Thyroid gland (tissue), 4 donors: ENCODE measurements at regions of chr13 and their contacts with region 1.

Region 1: GRCh38 chr13:108895220-108895704 is 265.9 kb downstream of the MYO16 start:
- DNase-seq: no peak
- H3K4me3 ChIP-seq: no peak overlapping the region
- H3K27ac ChIP-seq: no peak overlapping the region
- H3K4me1 ChIP-seq: no peaks in the 10 kb centered on the region
- H3K27me3 ChIP-seq: no peaks in the 10 kb centered on the region
- CTCF ChIP-seq: peak in 5 of 6 experiments; percentile 22 to 68 (median 54)
- POLR2A ChIP-seq: no peak

Region 2: GRCh38 chr13:107475753-107476453 is 1419.4 kb before region 1 on chr13:
- intact Hi-C with region 1: no loop called
- DNase-seq: no peak
- H3K4me3 ChIP-seq: no peak overlapping the region
- H3K27ac ChIP-seq: no peak overlapping the region
- H3K4me1 ChIP-seq: no peaks in the 10 kb centered on the region
- H3K27me3 ChIP-seq: no peaks in the 10 kb centered on the region
- CTCF ChIP-seq: no peak
- POLR2A ChIP-seq: no peak

Region 3: GRCh38 chr13:108230377-108230776 is 664.9 kb before region 1 on chr13:
- intact Hi-C with region 1: loop called (anchors 10 kb)
- DNase-seq: no peak
- H3K4me3 ChIP-seq: no peak overlapping the region
- H3K27ac ChIP-seq: no peak overlapping the region
- H3K4me1 ChIP-seq: no peaks in the 10 kb centered on the region
- H3K27me3 ChIP-seq: no peaks in the 10 kb centered on the region
- CTCF ChIP-seq: no peak
- POLR2A ChIP-seq: no peak

Region 4: DNA sequence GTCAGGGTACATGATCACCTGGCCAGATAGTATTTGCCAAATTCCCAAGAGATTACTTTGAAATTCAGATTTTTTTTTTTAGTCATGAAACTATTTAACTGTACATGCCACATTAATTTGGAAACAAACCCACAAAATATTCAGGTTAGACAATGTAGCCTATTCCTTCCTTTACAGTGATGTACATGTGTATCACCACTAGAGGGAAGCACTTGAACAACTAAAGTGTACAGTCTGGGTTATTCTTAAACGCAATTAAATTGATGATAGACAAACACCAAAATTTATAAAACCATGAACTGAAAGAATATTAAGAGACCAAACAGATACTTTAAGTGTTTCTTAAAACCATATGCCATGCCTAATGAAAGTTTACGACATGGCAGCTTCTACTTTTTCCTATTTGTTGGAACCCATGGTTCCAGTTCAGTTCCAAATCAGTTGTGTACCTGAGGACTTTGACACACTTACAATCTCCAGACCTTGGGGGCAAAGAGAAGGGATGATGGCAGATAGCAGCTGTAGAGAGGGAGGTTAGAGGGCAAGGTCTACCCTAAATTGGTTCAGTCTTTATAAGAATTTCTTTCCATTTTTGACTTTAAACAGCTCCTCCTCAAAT is 572.9 kb before region 1 on chr13:
- intact Hi-C with region 1: loop called (anchors 10 kb)
- DNase-seq: no peak
- H3K4me3 ChIP-seq: no peak overlapping the region
- H3K27ac ChIP-seq: no peak overlapping the region
- H3K4me1 ChIP-seq: no peaks in the 10 kb centered on the region
- H3K27me3 ChIP-seq: no peaks in the 10 kb centered on the region
- CTCF ChIP-seq: peak; percentile 12 to 69 (median 62)
- POLR2A ChIP-seq: no peak